Heart left ventricle (tissue), 16 donors: ENCODE measurements at regions of chr12 and their contacts with region 1.

Region 1: GRCh38 chr12:76031537-76032073 is at the start of gene PHLDA1:
- DNase-seq: peak; percentile 96 to 97 (median 97)
- ATAC-seq: peak; percentile 91 to 95 (median 94)
- H3K4me3 ChIP-seq: peak within 1 kb of the TSS; percentile 65 to 90 (median 80)
- H3K27ac ChIP-seq: peak within 1 kb of the TSS; percentile 89 to 99 (median 96)
- H3K4me1 ChIP-seq: peaks cover 0 to 35% (median 17%) of the 10 kb centered on the region in 12 donors
- H3K27me3 ChIP-seq: no peaks in the 10 kb centered on the region
- CTCF ChIP-seq: peak; percentile 54 to 78 (median 64)
- POLR2A ChIP-seq: peak in 1 of 2 donors; percentile 91
- total RNA-seq, gene PHLDA1: 4.2 to 44.4 (median 8.3) TPM

Region 2: GRCh38 chr12:75526655-75527511 is 504.7 kb before region 1 on chr12:
- intact Hi-C with region 1: loop called in 9 of 10 experiments (anchors 2 to 5 kb)
- DNase-seq: peak in 1 of 5 donors; percentile 28
- ATAC-seq: peak in 2 of 4 donors; percentile 49
- H3K4me3 ChIP-seq: no peak overlapping the region
- H3K27ac ChIP-seq: no peak overlapping the region
- H3K4me1 ChIP-seq: peaks cover 0 to 4% (median 0%) of the 10 kb centered on the region in 12 donors
- H3K27me3 ChIP-seq: no peaks in the 10 kb centered on the region
- CTCF ChIP-seq: peak; percentile 58 to 79 (median 66)
- POLR2A ChIP-seq: no peak

Region 3: GRCh38 chr12:75623631-75624118 is 407.9 kb before region 1 on chr12:
- intact Hi-C with region 1: loop called in 9 of 10 experiments (anchors 2 to 10 kb)
- DNase-seq: peak in 1 of 5 donors; percentile 27
- ATAC-seq: peak; percentile 88 to 95 (median 94)
- H3K4me3 ChIP-seq: no peak overlapping the region
- H3K27ac ChIP-seq: peak overlapping the region in 3 of 12 donors; percentile 21 to 45 (median 36)
- H3K4me1 ChIP-seq: peaks cover 0 to 10% (median 0%) of the 10 kb centered on the region in 12 donors
- H3K27me3 ChIP-seq: no peaks in the 10 kb centered on the region
- CTCF ChIP-seq: peak in 10 of 12 donors; percentile 5 to 50 (median 38)
- POLR2A ChIP-seq: no peak

Region 4: DNA sequence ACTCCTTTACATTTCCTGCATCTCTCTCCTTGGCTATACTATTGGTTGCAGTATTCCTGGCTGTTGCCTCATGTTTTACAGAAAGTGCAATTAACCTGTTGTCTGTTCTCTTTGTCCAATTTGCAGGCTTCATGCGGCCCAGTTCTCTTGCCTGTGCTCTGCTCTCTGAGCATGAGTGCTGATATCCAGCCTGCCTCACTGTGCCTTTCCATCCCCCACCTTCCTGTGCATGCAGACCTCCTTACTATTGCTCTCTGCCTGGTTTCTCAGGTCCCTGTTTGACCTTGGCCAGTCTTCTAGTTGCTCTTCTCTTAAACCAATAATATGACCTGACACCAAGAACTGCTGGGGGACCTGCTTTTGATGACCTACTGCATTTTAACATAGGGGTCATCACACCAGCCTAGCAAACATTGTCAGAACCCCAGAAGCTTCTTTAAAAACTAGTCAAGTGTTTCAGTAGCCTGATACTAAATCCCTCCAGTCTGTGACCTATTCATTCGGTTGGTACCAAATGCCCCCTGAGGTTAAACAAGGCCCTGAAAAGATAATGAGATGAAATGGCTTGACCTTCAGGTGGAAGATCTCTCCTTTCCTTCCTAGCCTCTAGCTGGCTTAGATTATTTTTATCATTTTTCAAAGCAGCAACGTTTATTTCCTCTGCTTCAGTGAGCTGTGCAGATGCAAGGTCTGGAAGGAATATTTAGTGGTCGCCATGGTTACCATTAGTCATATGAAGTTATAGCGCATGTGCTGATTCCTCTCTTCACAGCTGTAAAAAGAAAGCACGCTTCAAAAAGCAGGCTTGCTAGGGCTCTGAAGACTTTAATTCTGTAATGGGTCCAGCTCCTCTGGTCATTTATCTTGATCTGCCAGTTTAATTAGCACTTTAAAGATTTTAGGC is 216.5 kb before region 1 on chr12:
- intact Hi-C with region 1: loop called in 6 of 10 experiments (anchors 5 to 10 kb)
- DNase-seq: peak in 2 of 5 donors; percentile 34 to 46
- ATAC-seq: peak; percentile 75 to 94 (median 87)
- H3K4me3 ChIP-seq: no peak overlapping the region
- H3K27ac ChIP-seq: peak overlapping the region in 7 of 12 donors; percentile 11 to 60 (median 47)
- H3K4me1 ChIP-seq: peaks cover 0 to 18% (median 12%) of the 10 kb centered on the region in 12 donors
- H3K27me3 ChIP-seq: no peaks in the 10 kb centered on the region
- CTCF ChIP-seq: no peak
- POLR2A ChIP-seq: no peak

Region 5: DNA sequence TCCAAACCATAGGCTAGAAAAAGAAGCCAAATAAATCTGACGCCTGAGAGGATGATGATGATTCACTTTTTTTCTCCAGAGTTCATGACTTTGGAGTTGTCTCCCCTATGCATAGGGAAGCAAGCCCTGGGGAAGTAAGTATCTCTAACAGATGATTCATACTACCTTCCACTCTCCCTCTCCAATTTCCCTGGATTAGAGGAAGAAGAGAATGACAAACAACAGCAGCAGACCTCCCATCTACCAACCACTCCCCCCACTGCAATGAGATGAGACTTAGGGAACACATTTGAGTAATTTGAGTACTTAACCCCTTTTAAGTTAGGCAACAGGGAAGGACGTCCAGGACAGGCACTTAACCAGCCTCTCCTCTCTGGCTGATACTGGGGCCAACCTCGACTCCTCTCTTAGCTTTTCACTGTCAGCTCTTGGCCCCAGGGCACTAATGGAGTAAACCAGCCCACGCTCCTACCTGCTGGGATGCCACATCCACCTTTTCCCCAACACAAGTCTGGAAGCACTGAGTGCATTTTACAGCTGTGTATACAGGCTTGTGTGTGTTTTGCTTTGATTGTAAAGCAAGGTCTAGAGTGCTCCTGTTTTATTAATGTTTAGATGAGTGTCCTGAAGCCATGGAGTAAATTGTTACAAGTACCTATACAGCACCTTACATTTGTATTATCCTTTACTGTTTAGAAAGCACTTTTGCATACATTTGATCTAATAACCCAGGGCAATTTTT is 180.7 kb before region 1 on chr12:
- intact Hi-C with region 1: loop called in 1 of 10 experiments (anchors 5 kb)
- DNase-seq: no peak
- ATAC-seq: no peak
- H3K4me3 ChIP-seq: no peak overlapping the region
- H3K27ac ChIP-seq: no peak overlapping the region
- H3K4me1 ChIP-seq: peaks cover 0 to 30% (median 16%) of the 10 kb centered on the region in 12 donors
- H3K27me3 ChIP-seq: no peaks in the 10 kb centered on the region
- CTCF ChIP-seq: no peak
- POLR2A ChIP-seq: no peak

Region 6: GRCh38 chr12:75939016-75939642 is 92.5 kb before region 1 on chr12:
- intact Hi-C with region 1: loop called in 7 of 10 experiments (anchors 5 to 10 kb)
- DNase-seq: no peak
- ATAC-seq: peak in 1 of 4 donors; percentile 54
- H3K4me3 ChIP-seq: no peak overlapping the region
- H3K27ac ChIP-seq: no peak overlapping the region
- H3K4me1 ChIP-seq: peaks cover 0 to 35% (median 14%) of the 10 kb centered on the region in 12 donors
- H3K27me3 ChIP-seq: no peaks in the 10 kb centered on the region
- CTCF ChIP-seq: no peak
- POLR2A ChIP-seq: no peak

Region 7: GRCh38 chr12:76113800-76114757 is 82.5 kb after region 1 on chr12:
- intact Hi-C with region 1: no loop called
- DNase-seq: no peak
- ATAC-seq: peak; percentile 69 to 90 (median 82)
- H3K4me3 ChIP-seq: no peak overlapping the region
- H3K27ac ChIP-seq: peak overlapping the region in 2 of 12 donors; percentile 31 to 57
- H3K4me1 ChIP-seq: peaks cover 0 to 11% (median 3%) of the 10 kb centered on the region in 12 donors
- H3K27me3 ChIP-seq: no peaks in the 10 kb centered on the region
- CTCF ChIP-seq: no peak
- POLR2A ChIP-seq: no peak